ENCODE measurements at regions of chr5 and their contacts with region 1.

Region 1: GRCh38 chr5:33299621-33300208 is 141.1 kb upstream of the TARS1 start:
- DNase-seq: peak; percentile 77
- H3K4me3 Mint-ChIP-seq: peak overlapping the region; percentile 26
- H3K27ac Mint-ChIP-seq: peak overlapping the region; percentile 69
- H3K4me1 Mint-ChIP-seq: peaks cover 18% of the 10 kb centered on the region
- H3K27me3 Mint-ChIP-seq: no peaks in the 10 kb centered on the region
- CTCF ChIP-seq: peak; percentile 50

Region 2: GRCh38 chr5:32581010-32581785 is 718.5 kb before region 1 on chr5:
- CTCF ChIA-PET with region 1: no interaction called
- POLR2A ChIA-PET with region 1: no interaction called
- intact Hi-C with region 1: no loop called
- DNase-seq: no peak
- H3K4me3 Mint-ChIP-seq: no peak overlapping the region
- H3K27ac Mint-ChIP-seq: peak overlapping the region; percentile 27
- H3K4me1 Mint-ChIP-seq: peaks cover 8% of the 10 kb centered on the region
- H3K27me3 Mint-ChIP-seq: no peaks in the 10 kb centered on the region
- CTCF ChIP-seq: no peak

Region 3: GRCh38 chr5:32709781-32710549 is 589.8 kb before region 1 on chr5:
- CTCF ChIA-PET with region 1: interaction called, 12 read pairs
- POLR2A ChIA-PET with region 1: no interaction called
- intact Hi-C with region 1: loop called (anchors 1 kb)
- DNase-seq: peak; percentile 79
- H3K4me3 Mint-ChIP-seq: peak overlapping the region; percentile 83
- H3K27ac Mint-ChIP-seq: peak overlapping the region; percentile 25
- H3K4me1 Mint-ChIP-seq: peaks cover 6% of the 10 kb centered on the region
- H3K27me3 Mint-ChIP-seq: no peaks in the 10 kb centered on the region
- CTCF ChIP-seq: peak; percentile 64

Region 4: GRCh38 chr5:32942225-32942989 is 357.3 kb before region 1 on chr5:
- CTCF ChIA-PET with region 1: interaction called, 10 read pairs
- POLR2A ChIA-PET with region 1: no interaction called
- intact Hi-C with region 1: no loop called
- DNase-seq: peak; percentile 65
- H3K4me3 Mint-ChIP-seq: no peak overlapping the region
- H3K27ac Mint-ChIP-seq: no peak overlapping the region
- H3K4me1 Mint-ChIP-seq: no peaks in the 10 kb centered on the region
- H3K27me3 Mint-ChIP-seq: no peaks in the 10 kb centered on the region
- CTCF ChIP-seq: peak; percentile 30

Region 5: DNA sequence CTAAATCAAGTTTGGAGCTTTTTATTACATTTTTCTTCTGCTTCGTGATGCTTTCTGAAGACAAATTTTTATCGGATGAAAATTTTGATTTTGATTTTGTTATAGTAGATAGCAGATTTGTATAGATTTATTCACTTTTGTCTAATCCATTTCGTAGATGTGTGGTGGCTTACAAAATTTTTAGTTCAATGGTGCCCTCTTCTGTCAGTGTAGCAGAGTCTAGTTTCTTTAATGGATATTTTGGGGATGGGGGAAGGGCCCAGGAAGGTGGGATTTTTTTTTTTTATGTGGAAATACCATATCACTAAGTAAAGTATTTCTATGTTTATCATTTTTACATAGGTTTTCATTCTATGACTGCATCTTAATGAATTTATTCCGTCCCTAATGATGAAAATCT is 118.8 kb before region 1 on chr5:
- CTCF ChIA-PET with region 1: interaction called, 13 read pairs
- POLR2A ChIA-PET with region 1: interaction called, 3 read pairs
- intact Hi-C with region 1: loop called (anchors 1 kb)
- DNase-seq: peak; percentile 56
- H3K4me3 Mint-ChIP-seq: no peak overlapping the region
- H3K27ac Mint-ChIP-seq: peak overlapping the region; percentile 31
- H3K4me1 Mint-ChIP-seq: no peaks in the 10 kb centered on the region
- H3K27me3 Mint-ChIP-seq: no peaks in the 10 kb centered on the region
- CTCF ChIP-seq: peak; percentile 68

Region 6: GRCh38 chr5:33272288-33272687 is 27.4 kb before region 1 on chr5:
- CTCF ChIA-PET with region 1: interaction called, 17 read pairs
- POLR2A ChIA-PET with region 1: interaction called, 25 read pairs
- intact Hi-C with region 1: no loop called
- DNase-seq: peak; percentile 95
- H3K4me3 Mint-ChIP-seq: no peak overlapping the region
- H3K27ac Mint-ChIP-seq: peak overlapping the region; percentile 83
- H3K4me1 Mint-ChIP-seq: peaks cover 17% of the 10 kb centered on the region
- H3K27me3 Mint-ChIP-seq: no peaks in the 10 kb centered on the region
- CTCF ChIP-seq: no peak

Region 7: DNA sequence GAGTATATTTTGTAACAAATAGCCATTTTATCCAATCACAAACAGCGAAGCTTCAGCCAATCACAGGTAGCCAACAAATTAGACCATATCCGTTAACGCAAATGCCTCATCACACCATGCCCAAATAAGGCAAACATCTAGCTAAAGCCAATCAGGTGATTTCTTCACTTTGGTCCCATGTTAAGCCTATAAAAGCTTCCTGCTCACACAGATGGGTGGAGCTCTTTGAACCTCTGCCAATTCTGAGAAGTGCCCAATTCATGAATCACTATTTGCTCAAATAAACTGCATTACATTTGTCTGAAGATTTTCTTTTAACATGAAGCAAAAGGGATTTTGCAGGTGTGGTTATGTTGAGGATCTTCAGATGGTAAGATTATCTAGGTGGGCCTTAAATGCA is 13.4 kb after region 1 on chr5:
- CTCF ChIA-PET with region 1: interaction called, 27 read pairs
- POLR2A ChIA-PET with region 1: interaction called, 19 read pairs
- intact Hi-C with region 1: no loop called
- DNase-seq: peak; percentile 95
- H3K4me3 Mint-ChIP-seq: no peak overlapping the region
- H3K27ac Mint-ChIP-seq: peak overlapping the region; percentile 97
- H3K4me1 Mint-ChIP-seq: peaks cover 36% of the 10 kb centered on the region
- H3K27me3 Mint-ChIP-seq: no peaks in the 10 kb centered on the region
- CTCF ChIP-seq: no peak

Region 8: DNA sequence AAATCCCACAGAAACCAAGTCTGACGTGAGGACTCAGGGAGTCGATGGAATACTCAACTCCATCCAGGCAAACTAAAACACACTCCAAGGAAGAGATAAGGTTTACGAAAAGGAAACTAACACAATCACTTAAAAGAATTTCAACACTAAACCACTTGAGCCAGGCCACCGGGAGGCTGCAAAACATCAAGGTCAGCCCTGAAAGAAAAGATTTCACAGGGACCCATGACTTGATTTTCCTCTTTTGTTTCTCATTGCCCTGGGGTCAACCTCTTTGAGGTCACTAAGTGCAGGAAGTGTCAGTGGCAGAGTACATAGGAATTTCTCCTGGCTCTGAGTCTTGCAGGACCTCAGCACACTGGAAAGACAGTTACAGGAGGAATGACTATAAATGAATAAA is 63.2 kb after region 1 on chr5:
- CTCF ChIA-PET with region 1: no interaction called
- POLR2A ChIA-PET with region 1: no interaction called
- intact Hi-C with region 1: no loop called
- DNase-seq: no peak
- H3K4me3 Mint-ChIP-seq: no peak overlapping the region
- H3K27ac Mint-ChIP-seq: no peak overlapping the region
- H3K4me1 Mint-ChIP-seq: peaks cover 6% of the 10 kb centered on the region
- H3K27me3 Mint-ChIP-seq: no peaks in the 10 kb centered on the region
- CTCF ChIP-seq: no peak

Region 9: GRCh38 chr5:33409435-33410170 is 109.9 kb after region 1 on chr5:
- CTCF ChIA-PET with region 1: no interaction called
- POLR2A ChIA-PET with region 1: no interaction called
- intact Hi-C with region 1: no loop called
- DNase-seq: peak; percentile 12
- H3K4me3 Mint-ChIP-seq: no peak overlapping the region
- H3K27ac Mint-ChIP-seq: no peak overlapping the region
- H3K4me1 Mint-ChIP-seq: no peaks in the 10 kb centered on the region
- H3K27me3 Mint-ChIP-seq: no peaks in the 10 kb centered on the region
- CTCF ChIP-seq: no peak

Region 10: DNA sequence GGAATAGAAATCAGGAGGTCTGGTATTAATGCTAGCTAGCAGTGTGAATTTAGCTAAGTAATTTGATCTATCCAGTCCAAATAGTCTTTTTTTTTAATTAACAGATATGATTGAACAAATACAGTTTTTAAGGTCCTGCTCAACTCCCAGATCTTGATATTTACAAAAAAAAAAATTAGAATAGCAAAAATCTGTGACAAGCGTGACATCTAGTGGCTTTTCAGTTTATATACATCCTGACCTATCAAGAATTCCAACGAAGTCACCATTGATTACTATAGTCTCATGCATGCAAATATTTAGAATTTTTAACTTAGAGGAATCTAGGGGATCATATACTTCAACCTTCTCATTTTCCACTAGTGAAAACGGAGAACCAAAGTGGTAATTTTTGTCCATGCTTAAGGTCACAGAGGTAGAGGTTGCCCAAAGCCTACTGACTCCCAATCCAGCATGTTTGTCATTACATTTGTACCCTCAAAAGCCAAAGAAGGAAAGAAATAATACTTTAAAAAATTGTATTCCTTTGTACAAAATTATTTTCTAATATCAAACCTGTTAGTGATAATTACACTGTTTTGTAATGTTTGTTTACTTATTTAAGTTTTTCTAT is 123.4 kb after region 1 on chr5:
- CTCF ChIA-PET with region 1: interaction called, 25 read pairs
- POLR2A ChIA-PET with region 1: no interaction called
- intact Hi-C with region 1: loop called (anchors 1 kb)
- DNase-seq: peak; percentile 49
- H3K4me3 Mint-ChIP-seq: no peak overlapping the region
- H3K27ac Mint-ChIP-seq: no peak overlapping the region
- H3K4me1 Mint-ChIP-seq: no peaks in the 10 kb centered on the region
- H3K27me3 Mint-ChIP-seq: no peaks in the 10 kb centered on the region
- CTCF ChIP-seq: peak; percentile 62

Region 11: DNA sequence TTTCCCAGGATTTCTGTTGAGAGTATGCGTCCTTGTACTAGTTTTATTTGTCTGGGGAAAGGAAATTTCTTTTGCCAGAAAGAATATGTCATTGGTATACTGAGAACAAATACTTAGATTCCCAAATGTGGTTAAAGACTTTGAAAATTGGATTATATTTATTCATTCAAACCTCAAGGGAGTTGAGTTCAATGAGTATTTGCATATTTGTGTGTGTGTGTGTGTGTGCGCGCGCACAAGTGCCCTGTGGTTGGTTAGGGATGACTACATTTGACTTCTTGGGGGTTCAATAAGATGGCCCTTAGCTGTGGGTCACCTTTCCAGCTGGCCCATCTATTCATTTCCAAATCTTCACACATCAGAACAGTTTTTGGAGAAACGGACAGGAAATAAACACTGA is 641.4 kb after region 1 on chr5:
- CTCF ChIA-PET with region 1: no interaction called
- POLR2A ChIA-PET with region 1: no interaction called
- intact Hi-C with region 1: no loop called
- DNase-seq: no peak
- H3K4me3 Mint-ChIP-seq: no peak overlapping the region
- H3K27ac Mint-ChIP-seq: no peak overlapping the region
- H3K4me1 Mint-ChIP-seq: no peaks in the 10 kb centered on the region
- H3K27me3 Mint-ChIP-seq: peaks cover 55% of the 10 kb centered on the region
- CTCF ChIP-seq: no peak

Measured in MCF 10A (cell line).